Activated naive CD8-positive, alpha-beta T cell treated with anti-CD3 and anti-CD28 coated beads, Interleukin-2, amount 10 ng/mL, durations not matched to agents 7 days and 5 days (primary cell): ENCODE measurements at regions of chr14 and their contacts with region 1.

Region 1: GRCh38 chr14:20454516-20455354 is at the starts of genes APEX1 and OSGEP:
- DNase-seq: peak; percentile 90
- ATAC-seq: peak; percentile 90
- H3K4me3 Mint-ChIP-seq: peak within 1 kb of the TSS; percentile 41
- H3K27ac Mint-ChIP-seq: no peak within 1 kb of the TSS
- H3K4me1 Mint-ChIP-seq: peaks cover 19% of the 10 kb centered on the region
- H3K27me3 Mint-ChIP-seq: no peaks in the 10 kb centered on the region
- total RNA-seq, gene APEX1: 118 to 123 TPM
- total RNA-seq, gene OSGEP: 63.5 to 65.3 TPM

Region 2: DNA sequence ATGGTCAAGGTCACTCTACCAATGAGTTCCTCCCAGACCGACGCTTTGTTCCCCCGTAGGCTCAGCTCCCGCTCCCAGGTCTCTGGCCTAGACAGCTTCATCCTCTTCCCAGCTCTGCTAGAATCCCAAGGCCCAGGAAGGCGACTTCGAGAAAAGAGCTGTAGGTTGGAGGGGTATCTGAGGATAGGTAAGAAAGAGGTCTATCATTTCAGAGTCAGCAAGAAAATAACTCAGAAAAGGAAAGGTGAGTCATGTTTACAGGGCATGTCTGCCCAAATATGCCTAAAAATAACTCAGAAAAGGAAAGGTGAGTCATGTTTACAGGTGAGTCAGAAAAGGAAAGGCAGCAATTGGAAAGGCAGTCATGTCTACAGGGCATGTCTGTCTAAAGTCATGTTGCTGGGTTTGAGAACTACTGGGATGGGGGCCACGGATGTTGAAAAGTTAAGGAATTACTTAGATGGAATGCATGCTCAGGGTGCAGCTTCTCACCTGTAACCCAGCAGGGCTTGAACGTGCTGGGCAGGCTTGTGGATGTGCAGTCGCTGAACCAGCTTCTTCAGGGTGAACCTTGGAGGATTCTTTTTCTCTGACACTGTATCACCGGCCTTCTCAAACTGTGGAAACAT is 53.7 kb before region 1 on chr14:
- POLR2A ChIA-PET with region 1: no interaction called
- DNase-seq: no peak
- ATAC-seq: peak; percentile 54
- H3K4me3 Mint-ChIP-seq: no peak overlapping the region
- H3K27ac Mint-ChIP-seq: peak overlapping the region; percentile 42
- H3K4me1 Mint-ChIP-seq: peaks cover 17% of the 10 kb centered on the region
- H3K27me3 Mint-ChIP-seq: no peaks in the 10 kb centered on the region

Region 3: GRCh38 chr14:20413045-20413799 is 41.5 kb before region 1 on chr14 and contains the start of gene TEP1:
- POLR2A ChIA-PET with region 1: interaction called, 22 read pairs
- DNase-seq: peak; percentile 82
- ATAC-seq: peak; percentile 88
- H3K4me3 Mint-ChIP-seq: peak within 1 kb of the TSS; percentile 99
- H3K27ac Mint-ChIP-seq: peak within 1 kb of the TSS; percentile 99
- H3K4me1 Mint-ChIP-seq: peaks cover 38% of the 10 kb centered on the region
- H3K27me3 Mint-ChIP-seq: no peaks in the 10 kb centered on the region
- total RNA-seq, gene TEP1: 57.9 to 68.3 TPM

Region 4: DNA sequence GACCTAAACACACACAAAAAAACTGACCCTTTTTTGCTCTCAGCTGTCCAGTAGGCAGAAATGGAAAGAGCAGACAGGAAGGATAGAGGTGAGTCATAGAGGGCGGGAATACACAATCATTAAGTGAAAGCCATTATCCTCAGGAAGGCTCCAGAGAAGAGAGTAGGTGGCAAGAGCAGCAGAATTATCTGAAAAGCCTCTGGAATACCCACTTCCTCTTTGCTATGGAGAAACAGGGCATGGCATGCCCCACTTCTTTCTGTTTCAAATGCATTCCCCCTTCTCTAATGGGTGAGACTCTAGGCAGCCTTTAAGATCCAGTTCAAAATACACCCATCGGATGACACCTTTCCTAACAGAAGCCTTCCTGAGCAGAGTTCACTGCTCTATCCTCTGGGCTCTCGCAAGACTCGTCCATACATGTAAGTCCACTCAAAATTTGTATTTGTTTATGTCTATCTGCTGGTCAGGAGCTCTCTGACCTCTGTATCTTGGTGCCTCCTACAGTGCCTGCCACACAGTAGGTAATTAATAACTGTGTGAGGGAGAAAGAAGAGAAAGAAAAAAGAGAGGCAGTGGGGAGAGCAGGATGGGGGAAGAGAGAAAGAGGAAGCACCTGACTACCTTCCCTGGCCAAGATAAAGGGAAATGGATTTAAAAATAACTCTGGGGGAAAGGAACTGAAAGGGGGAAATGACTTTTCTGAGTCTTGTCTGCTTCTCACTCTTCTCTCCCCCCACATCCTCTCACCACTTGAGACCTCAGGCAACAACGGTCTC is 27.3 kb before region 1 on chr14:
- POLR2A ChIA-PET with region 1: interaction called, 35 read pairs
- DNase-seq: no peak
- ATAC-seq: peak; percentile 66
- H3K4me3 Mint-ChIP-seq: peak overlapping the region; percentile 83
- H3K27ac Mint-ChIP-seq: peak overlapping the region; percentile 94
- H3K4me1 Mint-ChIP-seq: peaks cover 36% of the 10 kb centered on the region
- H3K27me3 Mint-ChIP-seq: no peaks in the 10 kb centered on the region

Region 5: DNA sequence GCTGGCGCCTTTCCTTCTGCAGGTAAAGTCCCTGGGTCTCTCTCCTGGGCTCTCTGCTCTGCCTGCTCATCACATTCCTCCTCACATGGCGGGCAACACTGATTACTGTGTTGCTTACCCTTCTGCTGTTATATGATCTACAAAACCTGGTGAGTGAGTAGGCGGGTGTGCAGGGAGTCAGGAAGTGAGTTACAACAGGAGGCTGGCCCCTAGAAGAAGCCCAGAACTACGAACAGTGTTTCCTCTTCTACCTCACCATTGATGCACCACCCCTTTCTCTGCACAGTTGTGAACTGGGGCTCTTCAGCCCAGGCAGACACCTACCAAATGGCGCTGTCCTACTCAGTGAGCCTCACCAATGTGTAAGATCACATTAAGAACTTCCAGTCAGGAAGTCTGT is 13.9 kb before region 1 on chr14:
- POLR2A ChIA-PET with region 1: interaction called, 16 read pairs
- DNase-seq: peak; percentile 49
- ATAC-seq: peak; percentile 99
- H3K4me3 Mint-ChIP-seq: peak overlapping the region; percentile 82
- H3K27ac Mint-ChIP-seq: peak overlapping the region; percentile 92
- H3K4me1 Mint-ChIP-seq: peaks cover 25% of the 10 kb centered on the region
- H3K27me3 Mint-ChIP-seq: no peaks in the 10 kb centered on the region

Region 6: GRCh38 chr14:20469242-20469889 is 14.6 kb after region 1 on chr14 and contains the start of gene PNP:
- POLR2A ChIA-PET with region 1: interaction called, 36 read pairs
- DNase-seq: peak; percentile 86
- ATAC-seq: peak; percentile 94
- H3K4me3 Mint-ChIP-seq: peak within 1 kb of the TSS; percentile 99
- H3K27ac Mint-ChIP-seq: peak within 1 kb of the TSS; percentile 99
- H3K4me1 Mint-ChIP-seq: peaks cover 42% of the 10 kb centered on the region
- H3K27me3 Mint-ChIP-seq: no peaks in the 10 kb centered on the region
- total RNA-seq, gene PNP: 135 to 141 TPM